ENCODE measurements at regions of chr12 and their contacts with region 1.

Region 1: GRCh38 chr12:124917135-124917840 is 2.8 kb upstream of the UBC start:
- DNase-seq: peak; percentile 97
- ATAC-seq: peak; percentile 69
- H3K4me3 Mint-ChIP-seq: peak overlapping the region; percentile 100
- H3K27ac Mint-ChIP-seq: peak overlapping the region; percentile 100
- H3K4me1 Mint-ChIP-seq: peaks cover 83% of the 10 kb centered on the region
- H3K27me3 Mint-ChIP-seq: no peaks in the 10 kb centered on the region
- CTCF ChIP-seq: no peak

Region 2: GRCh38 chr12:124927201-124928094 is 10.2 kb after region 1 on chr12:
- CTCF ChIA-PET with region 1: interaction called, 20 read pairs
- POLR2A ChIA-PET with region 1: interaction called, 256 read pairs
- intact Hi-C with region 1: no loop called
- DNase-seq: peak; percentile 96
- ATAC-seq: peak; percentile 83
- H3K4me3 Mint-ChIP-seq: peak overlapping the region; percentile 95
- H3K27ac Mint-ChIP-seq: peak overlapping the region; percentile 98
- H3K4me1 Mint-ChIP-seq: peaks cover 50% of the 10 kb centered on the region
- H3K27me3 Mint-ChIP-seq: peaks cover 5% of the 10 kb centered on the region
- CTCF ChIP-seq: no peak

Region 3: DNA sequence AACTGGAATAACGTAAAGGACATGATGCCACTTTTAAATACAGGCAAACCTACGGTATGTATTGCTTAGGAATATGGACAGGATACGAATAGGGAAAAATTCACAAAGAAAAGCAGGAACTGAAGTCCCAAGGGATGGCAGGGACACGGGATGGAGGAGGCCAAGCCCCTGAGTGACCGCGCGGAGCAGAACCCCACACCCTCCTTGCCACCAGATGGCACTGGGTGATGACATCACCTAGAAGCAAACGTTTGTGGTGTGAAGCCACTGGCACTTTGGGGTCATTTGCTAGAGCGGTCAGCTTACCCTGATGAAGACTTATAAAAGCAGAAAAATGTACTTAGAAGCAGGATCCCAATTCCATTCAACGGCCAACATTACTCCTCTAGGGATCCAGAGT is 62.3 kb after region 1 on chr12:
- CTCF ChIA-PET with region 1: no interaction called
- POLR2A ChIA-PET with region 1: no interaction called
- intact Hi-C with region 1: no loop called
- DNase-seq: no peak
- ATAC-seq: no peak
- H3K4me3 Mint-ChIP-seq: no peak overlapping the region
- H3K27ac Mint-ChIP-seq: no peak overlapping the region
- H3K4me1 Mint-ChIP-seq: no peaks in the 10 kb centered on the region
- H3K27me3 Mint-ChIP-seq: no peaks in the 10 kb centered on the region
- CTCF ChIP-seq: no peak

Region 4: GRCh38 chr12:124992874-124993625 is 75.8 kb after region 1 on chr12:
- CTCF ChIA-PET with region 1: interaction called, 7 read pairs
- POLR2A ChIA-PET with region 1: interaction called, 10 read pairs
- intact Hi-C with region 1: loop called (anchors 5 kb)
- DNase-seq: peak; percentile 97
- ATAC-seq: peak; percentile 58
- H3K4me3 Mint-ChIP-seq: peak overlapping the region; percentile 76
- H3K27ac Mint-ChIP-seq: peak overlapping the region; percentile 92
- H3K4me1 Mint-ChIP-seq: peaks cover 23% of the 10 kb centered on the region
- H3K27me3 Mint-ChIP-seq: no peaks in the 10 kb centered on the region
- CTCF ChIP-seq: peak; percentile 67